ENCODE measurements at regions of chr12 and their contacts with region 1.

Region 1: DNA sequence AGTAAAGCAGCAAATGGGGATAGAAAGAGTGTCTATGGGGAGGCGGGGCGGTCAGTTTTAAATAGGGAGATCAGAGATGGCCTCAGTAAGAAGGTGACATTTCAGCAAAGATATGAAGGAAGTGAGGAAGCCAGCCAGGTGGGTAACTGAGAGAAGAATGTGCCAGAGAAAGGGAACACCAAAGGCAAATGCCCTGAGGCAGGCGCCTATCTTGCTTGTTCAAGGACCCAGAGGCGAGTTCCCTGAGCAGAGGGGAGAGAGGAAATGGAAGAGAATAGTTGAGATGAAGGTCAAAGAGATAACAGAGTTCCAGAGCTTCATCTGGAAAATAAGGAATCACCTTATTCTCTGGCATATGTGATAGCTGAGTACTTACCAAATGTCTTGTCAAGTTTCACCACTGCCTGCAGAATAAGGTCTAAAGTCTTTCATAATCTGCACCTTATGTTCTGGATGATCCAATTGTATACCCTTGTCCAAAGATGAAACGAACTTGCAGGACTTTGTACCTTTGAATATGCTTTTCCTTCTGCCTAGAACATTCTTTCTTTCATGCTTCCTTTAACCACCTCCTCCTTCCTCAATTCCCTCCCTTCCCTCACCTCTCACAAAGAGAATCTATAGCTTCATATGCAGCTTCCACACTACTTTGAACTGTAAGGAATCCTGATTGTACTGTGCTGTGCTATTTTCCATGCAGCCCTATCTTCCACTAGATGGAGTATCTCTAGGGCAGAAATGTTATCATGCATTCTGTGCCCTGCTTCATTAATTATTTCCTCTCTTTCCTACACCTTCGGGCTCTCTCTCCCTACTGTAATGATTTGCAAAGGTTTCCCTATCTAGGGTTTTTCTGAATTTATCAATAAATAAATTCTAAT is 38.5 kb downstream of the GNPTAB start:
- DNase-seq: no peak
- ATAC-seq: peak; percentile 20
- H3K4me3 Mint-ChIP-seq: no peak overlapping the region
- H3K27ac Mint-ChIP-seq: peak overlapping the region; percentile 65
- H3K4me1 Mint-ChIP-seq: peaks cover 60% of the 10 kb centered on the region
- H3K27me3 Mint-ChIP-seq: no peaks in the 10 kb centered on the region

Region 2: DNA sequence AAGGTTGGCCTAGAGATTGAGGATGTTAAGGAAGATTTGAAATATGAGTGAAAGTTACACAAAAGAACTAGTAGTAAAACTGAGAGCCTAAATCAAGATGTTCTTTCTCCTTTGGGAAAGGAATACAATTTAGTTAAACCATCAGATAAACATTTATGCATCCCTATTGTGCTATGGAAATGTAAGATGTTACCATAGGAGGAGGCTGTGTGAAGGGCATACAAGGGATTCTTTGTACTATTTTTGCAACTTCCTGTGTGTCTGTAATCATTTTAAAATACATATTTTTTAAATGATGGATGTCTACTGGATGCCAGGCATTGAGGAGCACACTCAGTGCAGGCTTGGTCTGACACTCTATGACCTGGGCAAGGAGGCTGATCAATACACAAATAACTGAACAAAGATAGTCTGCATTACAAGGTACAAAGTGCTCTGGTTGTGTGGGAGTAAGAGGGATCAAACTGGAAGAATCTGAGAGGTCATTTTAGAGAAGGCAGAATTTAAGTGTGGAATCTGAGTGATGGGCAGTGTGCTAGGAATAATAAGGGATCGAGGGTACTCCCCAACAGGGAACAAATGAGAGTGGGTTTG is 100.7 kb before region 1 on chr12:
- CTCF ChIA-PET with region 1: no interaction called
- POLR2A ChIA-PET with region 1: no interaction called
- DNase-seq: no peak
- ATAC-seq: no peak
- H3K4me3 Mint-ChIP-seq: no peak overlapping the region
- H3K27ac Mint-ChIP-seq: no peak overlapping the region
- H3K4me1 Mint-ChIP-seq: peaks cover 8% of the 10 kb centered on the region
- H3K27me3 Mint-ChIP-seq: peaks cover 3% of the 10 kb centered on the region

Region 3: GRCh38 chr12:101773650-101774162 is 18.6 kb before region 1 on chr12:
- CTCF ChIA-PET with region 1: interaction called, 30 read pairs
- POLR2A ChIA-PET with region 1: no interaction called
- DNase-seq: peak; percentile 80
- ATAC-seq: peak; percentile 79
- H3K4me3 Mint-ChIP-seq: no peak overlapping the region
- H3K27ac Mint-ChIP-seq: peak overlapping the region; percentile 17
- H3K4me1 Mint-ChIP-seq: peaks cover 42% of the 10 kb centered on the region
- H3K27me3 Mint-ChIP-seq: no peaks in the 10 kb centered on the region